ENCODE measurements at regions of chr5 and their contacts with region 1.

Region 1: DNA sequence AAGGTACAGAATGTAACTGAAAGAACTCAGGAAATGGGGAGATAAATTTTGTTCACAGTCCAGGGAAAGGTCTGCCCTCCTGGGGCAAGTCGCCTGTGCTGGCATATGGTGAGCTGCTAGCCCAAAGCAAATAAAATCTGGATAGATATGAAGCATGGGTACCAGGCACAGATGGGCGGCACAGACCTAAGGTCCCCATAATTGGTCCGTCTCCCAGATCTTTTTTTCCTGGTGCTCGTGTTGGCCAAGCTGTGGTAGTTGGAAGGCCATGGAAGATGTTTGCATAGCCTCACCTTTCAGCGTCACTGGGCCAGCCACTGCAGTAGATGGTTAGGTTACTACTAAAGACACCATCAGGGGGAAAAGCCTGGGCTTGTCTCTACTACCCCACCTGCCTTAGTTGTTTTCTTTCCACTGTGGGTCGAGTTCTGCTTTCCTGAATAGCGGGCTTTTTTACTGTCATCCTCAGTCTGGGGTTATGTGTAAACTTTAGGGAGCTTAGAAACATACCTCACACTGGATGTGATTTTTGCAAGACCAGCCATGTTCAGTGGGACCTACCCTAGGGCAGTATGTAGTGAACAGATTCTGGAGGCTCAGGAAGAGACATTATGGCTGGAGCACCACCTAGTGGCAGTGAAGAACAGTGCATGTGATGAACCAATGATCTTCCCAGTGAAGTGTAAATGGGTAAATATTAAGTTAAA is 24.2 kb upstream of the GLRX start:
- DNase-seq: peak; percentile 32 to 82 (median 64)
- ATAC-seq: peak; percentile 88
- H3K4me3 ChIP-seq: no peak overlapping the region
- H3K4me3 Mint-ChIP-seq: no peak overlapping the region
- H3K27ac ChIP-seq: no peak overlapping the region
- H3K27ac Mint-ChIP-seq: no peak overlapping the region
- H3K4me1 ChIP-seq: peaks cover 11% of the 10 kb centered on the region
- H3K4me1 Mint-ChIP-seq: peaks cover 10% of the 10 kb centered on the region
- H3K27me3 ChIP-seq: no peaks in the 10 kb centered on the region
- H3K27me3 Mint-ChIP-seq: no peaks in the 10 kb centered on the region
- CTCF ChIP-seq: peak; percentile 91

Region 2: GRCh38 chr5:94976853-94977252 is 869.9 kb before region 1 on chr5:
- CTCF ChIA-PET with region 1: no interaction called
- POLR2A ChIA-PET with region 1: no interaction called
- intact Hi-C with region 1: loop called in 1 of 2 experiments (anchors 10 kb)
- DNase-seq: no peak
- ATAC-seq: no peak
- H3K4me3 ChIP-seq: no peak overlapping the region
- H3K4me3 Mint-ChIP-seq: no peak overlapping the region
- H3K27ac ChIP-seq: no peak overlapping the region
- H3K27ac Mint-ChIP-seq: no peak overlapping the region
- H3K4me1 ChIP-seq: no peaks in the 10 kb centered on the region
- H3K4me1 Mint-ChIP-seq: no peaks in the 10 kb centered on the region
- H3K27me3 ChIP-seq: no peaks in the 10 kb centered on the region
- H3K27me3 Mint-ChIP-seq: no peaks in the 10 kb centered on the region
- CTCF ChIP-seq: no peak

Region 3: GRCh38 chr5:95664204-95664786 is 182.4 kb before region 1 on chr5:
- CTCF ChIA-PET with region 1: interaction called, 12 read pairs
- POLR2A ChIA-PET with region 1: no interaction called
- intact Hi-C with region 1: loop called (anchors 1 kb)
- DNase-seq: peak in 4 of 9 experiments; percentile 29 to 55 (median 42)
- ATAC-seq: peak; percentile 54
- H3K4me3 ChIP-seq: no peak overlapping the region
- H3K4me3 Mint-ChIP-seq: no peak overlapping the region
- H3K27ac ChIP-seq: no peak overlapping the region
- H3K27ac Mint-ChIP-seq: no peak overlapping the region
- H3K4me1 ChIP-seq: no peaks in the 10 kb centered on the region
- H3K4me1 Mint-ChIP-seq: peaks cover 3% of the 10 kb centered on the region
- H3K27me3 ChIP-seq: no peaks in the 10 kb centered on the region
- H3K27me3 Mint-ChIP-seq: no peaks in the 10 kb centered on the region
- CTCF ChIP-seq: peak; percentile 94

Region 4: GRCh38 chr5:95794070-95794516 is 52.6 kb before region 1 on chr5:
- CTCF ChIA-PET with region 1: interaction called, 641 read pairs
- POLR2A ChIA-PET with region 1: no interaction called
- intact Hi-C with region 1: no loop called
- DNase-seq: no peak
- ATAC-seq: no peak
- H3K4me3 ChIP-seq: no peak overlapping the region
- H3K4me3 Mint-ChIP-seq: no peak overlapping the region
- H3K27ac ChIP-seq: no peak overlapping the region
- H3K27ac Mint-ChIP-seq: no peak overlapping the region
- H3K4me1 ChIP-seq: no peaks in the 10 kb centered on the region
- H3K4me1 Mint-ChIP-seq: no peaks in the 10 kb centered on the region
- H3K27me3 ChIP-seq: no peaks in the 10 kb centered on the region
- H3K27me3 Mint-ChIP-seq: no peaks in the 10 kb centered on the region
- CTCF ChIP-seq: no peak

Region 5: GRCh38 chr5:95817440-95817839 is 29.3 kb before region 1 on chr5:
- CTCF ChIA-PET with region 1: interaction called, 33 read pairs
- POLR2A ChIA-PET with region 1: no interaction called
- intact Hi-C with region 1: no loop called
- DNase-seq: peak in 5 of 9 experiments; percentile 41 to 69 (median 52)
- ATAC-seq: peak; percentile 43
- H3K4me3 ChIP-seq: peak overlapping the region; percentile 41 to 53
- H3K4me3 Mint-ChIP-seq: peak overlapping the region; percentile 98
- H3K27ac ChIP-seq: peak overlapping the region; percentile 54 to 71
- H3K27ac Mint-ChIP-seq: peak overlapping the region; percentile 93
- H3K4me1 ChIP-seq: peaks cover 65% of the 10 kb centered on the region
- H3K4me1 Mint-ChIP-seq: peaks cover 74% of the 10 kb centered on the region
- H3K27me3 ChIP-seq: no peaks in the 10 kb centered on the region
- H3K27me3 Mint-ChIP-seq: no peaks in the 10 kb centered on the region
- CTCF ChIP-seq: no peak

Region 6: GRCh38 chr5:95835682-95836385 is 10.9 kb before region 1 on chr5:
- CTCF ChIA-PET with region 1: interaction called, 30 read pairs
- POLR2A ChIA-PET with region 1: interaction called, 4 read pairs
- intact Hi-C with region 1: loop called in 1 of 2 experiments (anchors 1 kb)
- DNase-seq: peak in 5 of 9 experiments; percentile 43 to 68 (median 50)
- ATAC-seq: peak; percentile 26
- H3K4me3 ChIP-seq: peak overlapping the region; percentile 80 to 94
- H3K4me3 Mint-ChIP-seq: peak overlapping the region; percentile 82
- H3K27ac ChIP-seq: peak overlapping the region; percentile 39 to 82
- H3K27ac Mint-ChIP-seq: peak overlapping the region; percentile 88
- H3K4me1 ChIP-seq: peaks cover 30% of the 10 kb centered on the region
- H3K4me1 Mint-ChIP-seq: peaks cover 52% of the 10 kb centered on the region
- H3K27me3 ChIP-seq: no peaks in the 10 kb centered on the region
- H3K27me3 Mint-ChIP-seq: no peaks in the 10 kb centered on the region
- CTCF ChIP-seq: no peak

Region 7: DNA sequence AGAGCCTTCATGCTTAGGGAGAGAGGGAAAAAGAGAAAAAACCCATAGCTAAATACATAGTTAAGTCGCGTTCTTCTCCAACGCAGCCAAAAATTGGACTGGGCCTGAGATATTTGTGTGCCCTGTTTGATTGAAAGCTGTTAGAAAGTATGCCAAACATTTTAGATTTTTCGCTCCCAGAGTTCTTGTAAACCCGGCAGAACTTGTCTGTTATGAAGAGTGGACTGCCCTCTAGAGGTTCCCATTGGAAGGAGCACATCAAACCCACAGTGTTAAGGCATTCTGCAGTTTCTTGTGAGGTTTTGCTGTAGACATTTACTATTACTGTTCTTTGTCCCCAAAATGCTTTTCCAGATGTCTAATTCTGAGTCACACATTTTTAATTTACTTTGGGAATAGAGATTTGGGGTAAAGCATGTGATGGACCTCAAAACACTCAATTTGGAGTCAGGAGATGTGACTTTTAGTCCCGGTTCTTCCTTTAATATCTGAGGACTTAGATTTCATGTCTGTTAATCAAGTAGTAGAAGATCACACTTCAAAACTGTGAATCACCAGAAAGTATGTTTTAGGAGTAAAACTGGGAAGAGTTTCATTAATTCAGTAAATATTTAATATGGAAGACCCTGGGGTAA is 489.8 kb after region 1 on chr5:
- CTCF ChIA-PET with region 1: interaction called, 312 read pairs
- POLR2A ChIA-PET with region 1: no interaction called
- intact Hi-C with region 1: no loop called
- DNase-seq: peak; percentile 19 to 81 (median 57)
- ATAC-seq: peak; percentile 97
- H3K4me3 ChIP-seq: no peak overlapping the region
- H3K4me3 Mint-ChIP-seq: no peak overlapping the region
- H3K27ac ChIP-seq: no peak overlapping the region
- H3K27ac Mint-ChIP-seq: no peak overlapping the region
- H3K4me1 ChIP-seq: no peaks in the 10 kb centered on the region
- H3K4me1 Mint-ChIP-seq: no peaks in the 10 kb centered on the region
- H3K27me3 ChIP-seq: no peaks in the 10 kb centered on the region
- H3K27me3 Mint-ChIP-seq: peaks cover 14% of the 10 kb centered on the region
- CTCF ChIP-seq: peak; percentile 92

Measured in CD8-positive, alpha-beta T cell (primary cell).